Left ventricle myocardium superior (tissue), 1 donor: ENCODE measurements at regions of chr10 and their contacts with region 1.

Region 1: DNA sequence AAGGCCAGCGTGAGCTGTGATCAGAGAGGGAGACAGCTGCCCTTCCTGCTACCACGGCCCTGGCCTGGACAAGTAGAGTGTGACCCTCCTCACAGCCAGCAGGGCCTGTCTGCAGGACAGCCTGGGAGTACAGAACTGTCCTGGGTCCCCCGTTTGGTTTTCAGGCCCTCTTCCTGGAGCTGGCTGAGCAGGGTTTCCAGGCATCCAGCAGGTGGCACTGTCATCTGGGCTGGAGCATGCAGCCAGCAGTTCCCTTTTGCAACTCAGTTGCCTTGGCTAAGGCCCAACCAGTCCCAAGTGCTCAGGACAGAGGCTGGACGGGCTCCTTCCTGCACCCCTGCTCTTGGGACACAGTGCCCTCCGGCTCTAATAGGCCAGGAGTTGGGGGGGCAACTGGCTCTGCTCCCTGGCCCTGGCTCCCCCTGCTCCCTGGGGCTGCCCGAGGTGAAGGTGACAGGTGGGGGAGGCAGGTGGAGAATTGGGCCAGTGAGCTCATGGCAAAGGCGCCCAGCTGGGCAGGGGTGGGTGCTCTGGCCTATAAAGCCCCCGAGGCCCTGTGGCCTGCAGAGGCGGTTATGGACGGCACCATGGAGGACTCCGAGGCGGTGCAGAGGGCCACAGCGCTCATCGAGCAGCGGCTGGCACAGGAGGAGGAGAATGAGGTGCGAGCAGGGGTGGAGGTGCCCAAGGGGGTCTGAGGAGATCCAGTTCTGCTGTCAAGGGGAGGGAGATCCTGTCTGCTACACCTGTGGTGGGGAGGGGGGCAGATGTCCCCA is at the start of gene ANKRD2:
- DNase-seq: peak; percentile 88
- ATAC-seq: peak; percentile 67
- total RNA-seq, gene ANKRD2: 318 TPM

Region 2: GRCh38 chr10:97612386-97612785 is 40.0 kb after region 1 on chr10:
- intact Hi-C with region 1: loop called (anchors 2 kb)
- DNase-seq: no peak
- ATAC-seq: peak; percentile 57

Region 3: DNA sequence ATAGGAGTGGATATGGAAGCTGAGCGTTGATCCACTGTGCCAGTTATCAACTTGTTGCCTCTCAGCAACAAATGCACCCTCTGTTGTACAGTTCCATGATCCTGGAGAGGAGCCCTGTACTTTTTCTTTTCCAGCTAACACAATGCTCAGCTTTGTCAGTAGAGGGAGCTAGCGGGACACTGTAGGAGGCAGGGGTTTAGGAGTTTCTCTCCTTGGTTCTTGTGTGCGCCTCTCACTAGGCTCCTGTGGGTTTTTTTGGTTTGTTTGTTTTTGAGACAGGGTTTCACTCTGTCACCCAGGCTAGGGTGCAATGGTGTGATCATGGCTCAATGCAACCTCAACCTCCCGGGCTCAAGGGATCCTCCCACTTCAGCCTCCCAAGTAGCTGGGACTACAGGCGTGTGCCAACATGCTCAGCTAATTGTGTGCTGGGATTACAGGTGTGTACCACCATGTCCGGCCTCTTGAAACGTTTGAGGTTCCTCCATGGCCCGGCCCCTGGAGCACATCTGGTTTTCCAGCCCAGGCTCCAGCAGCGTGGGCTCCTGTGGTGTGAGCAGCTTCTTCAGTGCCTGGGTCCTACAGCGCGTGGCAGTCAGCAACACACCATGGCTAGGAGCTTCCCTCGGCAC is 129.2 kb after region 1 on chr10:
- intact Hi-C with region 1: no loop called
- DNase-seq: no peak
- ATAC-seq: peak; percentile 91